Motor neuron (in vitro differentiated cells): ENCODE measurements at regions of chr7 and their contacts with region 1.

Region 1: GRCh38 chr7:51141451-51142003 is 175.1 kb downstream of the COBL start:
- ATAC-seq: peak; percentile 21 to 72 (median 60)
- H3K4me3 ChIP-seq: no peak overlapping the region
- H3K27ac ChIP-seq: no peak overlapping the region
- H3K4me1 ChIP-seq: peaks cover 6 to 12% of the 10 kb centered on the region in 2 donors

Region 2: DNA sequence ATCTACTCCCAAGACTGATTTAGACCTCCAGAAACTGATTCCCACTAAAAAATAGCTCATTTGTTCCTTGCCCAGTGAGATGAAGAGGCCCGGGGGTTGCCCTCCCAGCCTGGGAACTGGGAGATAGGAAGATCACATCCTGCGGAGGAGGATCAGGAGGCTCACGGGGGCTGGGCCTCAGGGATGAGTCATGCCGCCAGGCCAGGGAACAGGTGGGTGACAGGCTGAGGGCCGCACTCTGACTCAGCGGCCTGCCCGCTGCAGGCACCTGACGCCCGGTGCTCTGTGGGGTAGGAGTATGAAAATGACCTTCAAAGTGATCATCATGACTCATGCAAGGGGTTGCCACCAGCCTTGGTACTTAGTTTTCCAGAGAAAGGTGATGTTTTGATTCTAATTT is 944.0 kb before region 1 on chr7:
- in situ Hi-C with region 1: loop called in 1 of 9 experiments (anchors 25 kb)
- ATAC-seq: peak in 5 of 8 experiments; percentile 85 to 98 (median 85)
- H3K4me3 ChIP-seq: no peak overlapping the region
- H3K27ac ChIP-seq: no peak overlapping the region
- H3K4me1 ChIP-seq: no peaks in the 10 kb centered on the region

Region 3: DNA sequence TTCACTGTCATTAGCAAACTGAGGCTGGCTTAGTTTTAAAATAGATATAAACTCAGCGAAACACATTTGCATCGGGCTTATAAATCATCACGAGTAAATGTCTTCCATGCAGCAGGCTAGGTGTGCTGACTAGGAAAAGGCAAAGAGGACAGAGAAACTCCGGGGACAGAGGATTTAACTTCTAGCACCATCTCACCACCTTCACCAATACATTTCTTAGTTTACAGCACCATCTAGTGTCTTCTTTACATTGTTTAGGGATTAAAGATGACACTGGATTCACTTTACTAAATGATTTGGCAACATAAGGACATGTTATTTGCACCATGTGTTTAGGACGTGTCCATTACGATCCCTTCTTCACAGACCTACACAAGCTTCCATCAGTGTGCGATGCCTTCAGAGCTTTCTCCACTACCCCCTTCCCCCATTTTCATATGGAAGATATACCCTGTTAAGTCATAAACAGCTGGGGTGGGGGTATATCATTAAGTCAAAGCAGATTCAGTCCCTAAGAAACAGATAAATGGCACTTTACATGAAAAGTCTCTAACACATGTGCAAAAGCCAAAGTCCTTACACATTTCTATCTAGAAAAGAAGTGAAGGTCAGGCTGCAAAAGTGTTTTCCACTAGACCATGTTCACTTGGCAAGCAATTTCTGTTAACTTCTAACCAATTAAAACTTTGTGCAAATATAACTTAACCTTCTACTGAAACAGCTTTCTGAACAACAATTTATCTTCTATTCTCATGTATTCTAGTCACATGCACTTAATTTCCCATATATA is 462.1 kb before region 1 on chr7:
- in situ Hi-C with region 1: loop called in 1 of 9 experiments (anchors 25 kb)
- ATAC-seq: peak; percentile 43 to 86 (median 64)
- H3K4me3 ChIP-seq: no peak overlapping the region
- H3K27ac ChIP-seq: no peak overlapping the region
- H3K4me1 ChIP-seq: peaks cover 7% of the 10 kb centered on the region in 2 donors